ENCODE measurements at regions of chr6 and their contacts with region 1.

Region 1: GRCh38 chr6:168132531-168133167 is 53.6 kb upstream of the FRMD1 start:
- DNase-seq: peak; percentile 72
- ATAC-seq: peak; percentile 82 to 85

Region 2: GRCh38 chr6:167907837-167908681 is 224.6 kb before region 1 on chr6:
- intact Hi-C with region 1: loop called in 1 of 2 experiments (anchors 2 kb)
- DNase-seq: no peak
- ATAC-seq: peak in 1 of 2 donors; percentile 48

Region 3: DNA sequence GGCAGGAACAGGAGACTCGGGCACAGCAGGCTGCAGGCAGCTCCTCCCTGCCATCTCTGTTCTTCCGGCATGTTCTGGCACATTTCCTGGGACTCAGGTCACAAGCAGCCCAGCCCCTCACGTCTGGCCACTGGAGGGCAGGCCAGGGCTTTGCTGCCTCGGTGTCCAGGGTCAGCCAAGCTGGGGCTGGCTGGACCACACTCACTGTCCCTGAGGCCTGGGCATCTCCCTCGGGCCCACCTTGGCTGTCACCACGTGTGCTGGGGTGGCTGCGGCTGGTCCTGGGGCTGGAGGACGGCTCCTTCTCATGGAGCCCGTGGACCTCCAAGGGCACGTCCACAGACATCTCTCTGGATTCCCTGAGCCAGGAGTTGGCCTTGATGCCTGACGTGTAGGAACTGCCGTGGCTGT is 72.1 kb before region 1 on chr6:
- intact Hi-C with region 1: loop called in 1 of 2 experiments (anchors 2 kb)
- DNase-seq: peak; percentile 67
- ATAC-seq: peak; percentile 70 to 72

Measured in left cardiac atrium (tissue), 4 donors.